GM10248 (cell line): ENCODE measurements at regions of chr5 and their contacts with region 1.

Region 1: DNA sequence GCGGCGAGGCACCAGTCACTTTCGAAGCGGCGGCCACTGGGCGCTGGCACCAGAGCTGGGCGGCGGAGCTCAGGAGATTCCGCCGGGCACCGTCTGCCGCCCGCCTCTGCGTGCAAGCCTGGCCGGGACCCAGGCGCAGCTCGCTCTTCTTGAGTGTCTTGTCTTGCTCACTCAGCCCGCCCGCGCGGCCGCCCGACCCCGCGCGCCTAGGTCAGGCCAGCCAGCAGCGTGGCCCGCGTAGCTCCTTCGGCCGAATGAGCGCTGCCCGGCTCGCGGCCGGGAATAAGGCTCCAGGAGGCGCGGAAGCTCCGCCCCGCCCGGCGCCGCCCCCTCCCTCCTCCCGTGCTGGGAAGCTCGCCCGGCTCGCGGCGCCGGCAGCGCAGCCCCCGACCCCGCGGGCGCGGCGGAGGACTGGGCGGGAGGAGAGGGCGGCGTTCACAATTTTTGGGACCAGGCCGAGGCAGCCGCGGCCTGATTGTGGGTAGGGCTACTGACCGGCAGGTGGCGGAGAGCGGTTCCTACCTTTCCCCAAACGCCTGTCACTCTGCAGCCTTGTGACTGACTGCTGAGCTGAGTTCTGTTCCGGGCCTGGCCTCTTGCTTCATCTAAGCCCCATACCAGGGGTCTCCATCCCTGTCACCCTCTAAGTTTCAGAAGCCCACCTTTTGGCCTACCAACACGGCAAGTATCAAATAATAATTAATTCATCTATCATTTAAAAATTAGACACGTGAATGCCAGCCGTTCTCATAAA is at the start of gene HBEGF:
- DNase-seq: peak; percentile 81
- CTCF ChIP-seq: peak; percentile 47

Region 2: DNA sequence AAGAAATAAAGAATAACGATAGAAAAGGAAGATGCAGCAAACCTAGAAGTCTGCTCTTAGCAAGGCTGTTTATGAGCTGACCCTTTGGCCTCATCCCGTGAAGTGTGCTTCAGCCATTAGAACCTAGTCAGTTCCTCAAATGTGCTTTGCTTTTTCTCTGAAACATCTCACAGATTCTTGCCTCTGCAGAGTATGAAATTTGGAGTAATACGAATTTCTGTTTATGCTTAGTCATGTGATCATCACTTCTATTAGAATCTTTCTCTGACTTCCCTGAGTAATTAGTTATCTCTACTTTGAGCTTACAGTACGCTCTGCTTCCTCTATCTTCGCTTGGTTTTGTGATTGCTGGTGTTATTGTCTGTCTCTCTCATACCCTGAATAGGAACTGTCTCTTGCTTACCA is 160.3 kb before region 1 on chr5:
- CTCF ChIA-PET with region 1: no interaction called
- POLR2A ChIA-PET with region 1: no interaction called
- DNase-seq: no peak
- CTCF ChIP-seq: no peak

Region 3: GRCh38 chr5:140336388-140336787 is 10.1 kb before region 1 on chr5:
- CTCF ChIA-PET with region 1: interaction called, 50 read pairs
- POLR2A ChIA-PET with region 1: no interaction called
- DNase-seq: no peak
- CTCF ChIP-seq: no peak

Region 4: GRCh38 chr5:140357726-140358093 is 11.2 kb after region 1 on chr5:
- CTCF ChIA-PET with region 1: interaction called, 205 read pairs
- POLR2A ChIA-PET with region 1: interaction called, 3 read pairs
- DNase-seq: peak; percentile 90
- CTCF ChIP-seq: peak; percentile 92

Region 5: DNA sequence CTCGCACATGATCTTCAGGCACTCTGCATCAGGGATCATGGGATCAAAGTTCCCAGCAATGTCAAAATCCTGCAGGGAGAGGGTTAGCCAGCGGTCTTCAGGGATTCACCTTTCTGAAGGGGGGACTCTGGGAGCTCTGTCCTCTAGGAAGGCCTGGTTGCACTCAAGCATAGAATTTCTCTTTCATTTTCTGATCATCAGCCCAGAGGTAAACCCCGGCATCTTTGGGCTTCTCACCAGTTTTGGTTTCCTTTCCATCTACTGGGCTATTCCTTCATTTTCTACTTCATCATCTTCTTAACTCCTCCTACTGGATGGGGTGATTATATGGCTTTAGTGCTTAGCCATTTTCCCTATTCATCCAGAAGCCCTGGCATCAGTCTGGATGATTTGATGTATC is 331.4 kb after region 1 on chr5:
- CTCF ChIA-PET with region 1: no interaction called
- POLR2A ChIA-PET with region 1: no interaction called
- DNase-seq: peak; percentile 43
- CTCF ChIP-seq: no peak